ENCODE measurements at regions of chr15 and their contacts with region 1.

Region 1: GRCh38 chr15:55789066-55789660 is 46.2 kb upstream of the PRTG start:
- DNase-seq: peak; percentile 83
- ATAC-seq: peak; percentile 57
- H3K4me3 Mint-ChIP-seq: no peak overlapping the region
- H3K27ac Mint-ChIP-seq: no peak overlapping the region
- H3K4me1 Mint-ChIP-seq: no peaks in the 10 kb centered on the region
- H3K27me3 Mint-ChIP-seq: no peaks in the 10 kb centered on the region

Region 2: GRCh38 chr15:55775316-55775715 is 13.8 kb before region 1 on chr15:
- CTCF ChIA-PET with region 1: interaction called, 14 read pairs
- POLR2A ChIA-PET with region 1: no interaction called
- intact Hi-C with region 1: no loop called
- DNase-seq: no peak
- ATAC-seq: no peak
- H3K4me3 Mint-ChIP-seq: no peak overlapping the region
- H3K27ac Mint-ChIP-seq: no peak overlapping the region
- H3K4me1 Mint-ChIP-seq: no peaks in the 10 kb centered on the region
- H3K27me3 Mint-ChIP-seq: peaks cover 11% of the 10 kb centered on the region

Region 3: GRCh38 chr15:55799291-55800212 is 10.4 kb after region 1 on chr15:
- CTCF ChIA-PET with region 1: interaction called, 12 read pairs
- POLR2A ChIA-PET with region 1: no interaction called
- intact Hi-C with region 1: no loop called
- DNase-seq: peak; percentile 64
- ATAC-seq: no peak
- H3K4me3 Mint-ChIP-seq: no peak overlapping the region
- H3K27ac Mint-ChIP-seq: no peak overlapping the region
- H3K4me1 Mint-ChIP-seq: peaks cover 2% of the 10 kb centered on the region
- H3K27me3 Mint-ChIP-seq: peaks cover 12% of the 10 kb centered on the region

Region 4: DNA sequence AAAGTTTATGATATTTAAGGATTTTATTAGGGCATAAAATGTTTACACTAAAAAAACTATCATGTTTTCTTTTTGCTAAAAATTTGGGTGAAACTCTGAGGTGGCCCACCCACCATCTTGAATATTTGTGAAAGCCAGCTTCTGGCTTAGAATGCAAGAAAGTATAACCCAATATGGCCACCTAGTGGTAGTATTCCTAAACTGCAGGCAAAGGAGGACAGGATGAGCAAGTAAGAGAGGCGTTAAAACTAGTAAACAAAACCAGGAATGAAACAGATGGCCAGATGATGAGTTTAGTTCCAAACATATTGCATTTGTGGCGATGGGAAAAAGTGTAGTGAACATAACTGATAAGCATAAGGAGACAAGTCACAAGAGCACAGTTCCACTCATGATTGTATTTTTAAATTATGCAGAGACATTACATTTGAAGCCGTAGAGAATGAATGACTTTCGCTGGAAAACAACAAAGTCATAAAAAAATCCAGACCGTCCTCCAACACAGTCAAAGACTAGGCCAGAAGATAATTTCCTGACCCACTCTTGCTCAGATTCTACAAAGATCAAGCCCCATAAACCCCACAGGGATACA is 57.0 kb after region 1 on chr15:
- CTCF ChIA-PET with region 1: interaction called, 7 read pairs
- POLR2A ChIA-PET with region 1: no interaction called
- intact Hi-C with region 1: loop called (anchors 1 kb)
- DNase-seq: peak; percentile 52
- ATAC-seq: peak; percentile 66
- H3K4me3 Mint-ChIP-seq: no peak overlapping the region
- H3K27ac Mint-ChIP-seq: no peak overlapping the region
- H3K4me1 Mint-ChIP-seq: no peaks in the 10 kb centered on the region
- H3K27me3 Mint-ChIP-seq: no peaks in the 10 kb centered on the region